ENCODE measurements at regions of chr20 and their contacts with region 1.

Region 1: GRCh38 chr20:18507218-18508021 is at the start of gene SEC23B:
- DNase-seq: peak; percentile 99
- ATAC-seq: peak; percentile 98
- H3K4me3 ChIP-seq: peak within 1 kb of the TSS; percentile 76 to 88 (median 87)
- H3K27ac ChIP-seq: peak within 1 kb of the TSS; percentile 95
- H3K4me1 ChIP-seq: peaks cover 44% of the 10 kb centered on the region
- H3K27me3 ChIP-seq: no peaks in the 10 kb centered on the region; a peak in 1 of 5 replicates
- CTCF ChIP-seq: no peak
- EP300 ChIP-seq: no peak; a peak in 1 of 4 replicates
- POLR2A ChIP-seq: peak; percentile 90 to 95
- RAD21 ChIP-seq: 0 out of 2 replicates have a peak, but pooled peaks have one; percentile 12
- total RNA-seq, gene SEC23B: 120 and 178 TPM in 2 replicates

Region 2: DNA sequence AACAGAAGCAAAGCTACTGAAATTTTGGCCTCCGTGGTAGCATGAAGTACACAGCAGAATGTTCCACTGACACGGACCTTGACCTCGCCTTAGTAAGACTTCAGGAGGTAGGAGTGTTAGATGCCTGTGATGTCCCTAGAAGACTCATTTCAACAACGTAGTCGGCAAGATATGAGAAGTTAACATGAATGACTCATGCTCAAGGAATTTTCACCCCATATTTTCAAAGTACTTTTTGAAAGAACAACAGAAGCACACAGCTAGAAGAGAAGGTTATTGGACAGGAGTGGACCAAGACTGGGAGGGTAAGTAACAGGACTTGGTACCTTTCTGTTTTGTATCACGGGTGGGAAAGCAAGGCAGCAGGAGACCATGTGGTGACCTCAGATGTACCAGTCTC is 118.6 kb before region 1 on chr20:
- CTCF ChIA-PET with region 1: no interaction called
- POLR2A ChIA-PET with region 1: interaction called, 10 read pairs
- in situ Hi-C with region 1: no loop called
- intact Hi-C with region 1: no loop called
- DNase-seq: peak; percentile 95
- ATAC-seq: peak; percentile 89
- H3K4me3 ChIP-seq: no peak overlapping the region
- H3K27ac ChIP-seq: peak overlapping the region; percentile 9
- H3K4me1 ChIP-seq: peaks cover 30% of the 10 kb centered on the region
- H3K27me3 ChIP-seq: no peaks in the 10 kb centered on the region
- CTCF ChIP-seq: no peak
- EP300 ChIP-seq: peak in 1 of 2 experiments; percentile 72; a peak in 1 of 4 replicates
- POLR2A ChIP-seq: no peak
- RAD21 ChIP-seq: no peak

Region 3: DNA sequence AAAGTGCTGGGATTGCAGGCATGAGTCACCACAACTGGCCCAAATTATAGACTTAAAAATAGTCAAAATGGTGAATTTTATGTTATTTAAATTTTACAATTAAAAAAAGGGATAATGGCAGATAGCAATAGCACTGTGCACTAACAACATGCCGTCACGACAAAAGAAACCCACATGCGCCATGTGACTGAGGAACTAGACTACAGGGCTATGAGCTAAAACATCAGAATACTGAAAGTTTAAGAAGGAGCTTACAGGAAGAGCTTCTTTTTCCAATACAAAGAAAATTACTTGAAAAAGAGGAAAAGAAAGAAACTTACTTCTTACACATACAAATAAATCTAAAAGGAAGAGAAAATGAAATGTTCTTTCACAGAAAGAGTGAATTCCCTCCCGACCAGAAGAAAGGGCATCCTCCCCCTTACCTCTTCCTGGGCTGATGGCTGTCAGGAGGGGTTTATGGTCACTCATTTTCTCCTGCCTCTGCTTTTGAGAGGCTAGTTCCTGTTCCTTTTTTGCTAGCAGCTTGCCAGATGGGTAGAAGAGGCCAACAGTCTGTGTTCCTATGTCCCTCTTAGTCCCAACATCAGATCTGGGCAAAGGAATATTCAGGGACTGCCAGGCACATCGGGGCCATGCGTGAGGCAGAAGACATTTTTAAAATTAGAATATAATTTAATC is 95.1 kb before region 1 on chr20:
- CTCF ChIA-PET with region 1: no interaction called
- POLR2A ChIA-PET with region 1: interaction called, 4 read pairs
- in situ Hi-C with region 1: no loop called
- intact Hi-C with region 1: loop called (anchors 1 kb)
- DNase-seq: no peak
- ATAC-seq: no peak
- H3K4me3 ChIP-seq: no peak overlapping the region
- H3K27ac ChIP-seq: no peak overlapping the region
- H3K4me1 ChIP-seq: peaks cover 13% of the 10 kb centered on the region
- H3K27me3 ChIP-seq: no peaks in the 10 kb centered on the region
- CTCF ChIP-seq: no peak
- EP300 ChIP-seq: no peak
- POLR2A ChIP-seq: no peak
- RAD21 ChIP-seq: no peak

Region 4: DNA sequence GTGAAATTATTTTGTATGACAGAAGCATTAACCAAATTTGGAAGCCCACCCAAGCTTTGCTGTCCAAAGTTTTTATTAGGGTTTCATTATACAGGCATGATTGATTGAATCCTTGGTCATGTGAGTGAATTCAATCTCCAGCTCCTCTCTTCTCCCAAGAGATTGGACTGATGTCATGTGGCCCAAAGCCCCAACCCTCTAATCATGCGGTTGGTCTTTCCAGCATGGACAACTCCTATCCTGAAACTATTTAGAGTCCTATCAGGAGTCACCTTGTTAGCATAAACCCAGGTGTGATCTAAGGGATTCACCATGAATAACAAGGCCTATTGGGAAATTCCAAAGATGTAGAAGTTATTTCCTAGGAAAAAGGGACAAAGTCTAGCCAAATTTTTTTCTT is 29.6 kb before region 1 on chr20:
- CTCF ChIA-PET with region 1: no interaction called
- POLR2A ChIA-PET with region 1: interaction called, 15 read pairs
- in situ Hi-C with region 1: no loop called
- intact Hi-C with region 1: no loop called
- DNase-seq: no peak
- ATAC-seq: no peak
- H3K4me3 ChIP-seq: no peak overlapping the region
- H3K27ac ChIP-seq: no peak overlapping the region
- H3K4me1 ChIP-seq: peaks cover 21% of the 10 kb centered on the region
- H3K27me3 ChIP-seq: no peaks in the 10 kb centered on the region
- CTCF ChIP-seq: no peak
- EP300 ChIP-seq: no peak
- POLR2A ChIP-seq: no peak
- RAD21 ChIP-seq: no peak

Region 5: GRCh38 chr20:18496740-18497592 is 10.5 kb before region 1 on chr20 and contains the start of gene RBBP9:
- CTCF ChIA-PET with region 1: no interaction called
- POLR2A ChIA-PET with region 1: interaction called, 215 read pairs
- in situ Hi-C with region 1: no loop called
- intact Hi-C with region 1: loop called (anchors 1 kb)
- DNase-seq: peak; percentile 84
- ATAC-seq: peak; percentile 100
- H3K4me3 ChIP-seq: peak within 1 kb of the TSS; percentile 91 to 99 (median 92)
- H3K27ac ChIP-seq: peak within 1 kb of the TSS; percentile 73
- H3K4me1 ChIP-seq: peaks cover 32% of the 10 kb centered on the region
- H3K27me3 ChIP-seq: no peaks in the 10 kb centered on the region; a peak in 1 of 5 replicates
- CTCF ChIP-seq: peak; percentile 29; the same call in 1 of the 2 replicates
- EP300 ChIP-seq: peak; percentile 31 to 35; a peak in 1 of 4 replicates
- POLR2A ChIP-seq: peak; percentile 92 to 97
- RAD21 ChIP-seq: peak; percentile 51; the same call in 1 of the 2 replicates
- total RNA-seq, gene RBBP9: 56.3 and 99.5 TPM in 2 replicates

Region 6: DNA sequence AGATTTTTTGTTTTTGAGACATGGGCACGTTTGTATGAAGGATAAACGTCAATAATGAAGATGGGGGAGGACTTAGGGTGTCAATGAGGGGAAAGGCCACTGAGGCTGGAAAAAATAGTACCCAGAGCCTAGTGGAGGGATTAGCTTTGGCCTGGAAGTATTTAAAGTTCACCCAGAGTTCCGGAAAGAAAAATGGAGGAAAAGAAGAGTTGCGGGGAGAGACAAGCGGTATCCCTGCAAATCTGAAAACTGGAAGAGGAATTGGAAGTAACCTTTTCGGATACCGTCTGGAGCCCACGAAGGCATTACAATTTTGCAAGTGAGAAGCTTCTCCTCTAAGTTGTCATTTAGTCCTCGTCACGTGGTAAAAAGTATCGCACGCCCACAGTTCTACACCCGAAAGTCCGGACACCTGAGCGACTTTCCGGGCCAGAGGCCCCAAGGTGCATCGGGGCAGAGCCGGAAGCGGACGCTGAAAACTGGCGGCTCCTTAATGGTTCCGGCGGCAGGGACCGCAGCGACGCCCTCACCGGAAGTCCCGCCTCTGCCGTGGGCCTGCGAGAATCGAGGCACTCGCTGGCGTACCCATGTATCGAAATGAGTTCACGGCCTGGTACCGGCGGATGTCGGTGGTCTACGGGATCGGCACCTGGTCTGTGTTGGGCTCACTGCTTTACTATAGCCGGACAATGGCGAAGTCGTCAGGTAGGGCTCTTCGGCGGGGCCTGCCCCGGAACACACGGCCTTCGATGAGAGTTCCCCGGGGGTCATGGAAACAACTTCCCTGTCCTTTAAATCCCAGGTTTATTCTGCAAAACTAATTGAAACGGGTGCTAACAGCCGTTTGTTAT is 59.7 kb after region 1 on chr20 and contains the start of gene SMIM26:
- CTCF ChIA-PET with region 1: no interaction called
- POLR2A ChIA-PET with region 1: interaction called, 30 read pairs
- in situ Hi-C with region 1: no loop called
- intact Hi-C with region 1: loop called (anchors 5 kb)
- DNase-seq: peak; percentile 96
- ATAC-seq: peak; percentile 99
- H3K4me3 ChIP-seq: peak within 1 kb of the TSS; percentile 69 to 97 (median 89)
- H3K27ac ChIP-seq: peak within 1 kb of the TSS; percentile 83
- H3K4me1 ChIP-seq: peaks cover 14% of the 10 kb centered on the region
- H3K27me3 ChIP-seq: no peaks in the 10 kb centered on the region; a peak in 1 of 5 replicates
- CTCF ChIP-seq: 0 out of 2 replicates have a peak, but pooled peaks have one; percentile 19
- EP300 ChIP-seq: peak in 1 of 2 experiments; percentile 54; a peak in 2 of 4 replicates
- POLR2A ChIP-seq: peak; percentile 94 to 99
- RAD21 ChIP-seq: peak; percentile 58; the same call in 1 of the 2 replicates
- total RNA-seq, gene SMIM26: 185 and 214 TPM in 2 replicates

Region 7: GRCh38 chr20:18587665-18588573 is 80.5 kb after region 1 on chr20 and contains the start of gene DTD1:
- CTCF ChIA-PET with region 1: no interaction called
- POLR2A ChIA-PET with region 1: interaction called, 45 read pairs
- in situ Hi-C with region 1: no loop called
- intact Hi-C with region 1: loop called (anchors 1 kb)
- DNase-seq: peak; percentile 84
- ATAC-seq: peak; percentile 90
- H3K4me3 ChIP-seq: peak within 1 kb of the TSS; percentile 67 to 80 (median 80)
- H3K27ac ChIP-seq: peak within 1 kb of the TSS; percentile 36
- H3K4me1 ChIP-seq: peaks cover 50% of the 10 kb centered on the region
- H3K27me3 ChIP-seq: no peaks in the 10 kb centered on the region
- CTCF ChIP-seq: peak; percentile 88
- EP300 ChIP-seq: no peak
- POLR2A ChIP-seq: peak; percentile 62 to 76
- RAD21 ChIP-seq: peak; percentile 88
- total RNA-seq, gene DTD1: 79.3 and 85.5 TPM in 2 replicates

Region 8: DNA sequence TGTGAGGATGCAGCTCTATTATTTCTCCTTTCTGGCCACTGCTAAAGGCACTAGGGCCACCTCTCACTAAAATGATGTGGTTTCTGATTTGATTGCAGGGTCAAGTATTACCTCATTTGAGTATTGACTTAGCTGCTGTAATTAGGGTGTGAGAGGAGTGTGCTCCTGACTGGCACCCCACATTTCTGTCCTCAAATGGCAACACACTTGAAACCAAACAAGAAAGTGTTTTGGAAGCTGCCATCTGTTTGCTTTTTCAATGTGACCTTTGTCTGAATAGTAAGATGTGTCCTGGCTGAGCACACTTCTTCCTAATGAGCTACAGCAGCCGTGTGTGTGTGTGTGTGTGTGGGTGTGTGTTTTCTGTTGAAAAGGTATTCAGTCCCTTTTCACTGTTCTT is 243.3 kb after region 1 on chr20:
- CTCF ChIA-PET with region 1: no interaction called
- POLR2A ChIA-PET with region 1: no interaction called
- in situ Hi-C with region 1: no loop called
- intact Hi-C with region 1: no loop called
- DNase-seq: peak; percentile 42
- ATAC-seq: peak; percentile 69
- H3K4me3 ChIP-seq: no peak overlapping the region
- H3K27ac ChIP-seq: peak overlapping the region; percentile 3
- H3K4me1 ChIP-seq: peaks cover 13% of the 10 kb centered on the region
- H3K27me3 ChIP-seq: no peaks in the 10 kb centered on the region
- CTCF ChIP-seq: no peak
- EP300 ChIP-seq: no peak
- POLR2A ChIP-seq: no peak
- RAD21 ChIP-seq: no peak

Measured in HepG2 (cell line).